OCI-LY7 (cell line): ENCODE measurements at regions of chr16 and their contacts with region 1.

Region 1: DNA sequence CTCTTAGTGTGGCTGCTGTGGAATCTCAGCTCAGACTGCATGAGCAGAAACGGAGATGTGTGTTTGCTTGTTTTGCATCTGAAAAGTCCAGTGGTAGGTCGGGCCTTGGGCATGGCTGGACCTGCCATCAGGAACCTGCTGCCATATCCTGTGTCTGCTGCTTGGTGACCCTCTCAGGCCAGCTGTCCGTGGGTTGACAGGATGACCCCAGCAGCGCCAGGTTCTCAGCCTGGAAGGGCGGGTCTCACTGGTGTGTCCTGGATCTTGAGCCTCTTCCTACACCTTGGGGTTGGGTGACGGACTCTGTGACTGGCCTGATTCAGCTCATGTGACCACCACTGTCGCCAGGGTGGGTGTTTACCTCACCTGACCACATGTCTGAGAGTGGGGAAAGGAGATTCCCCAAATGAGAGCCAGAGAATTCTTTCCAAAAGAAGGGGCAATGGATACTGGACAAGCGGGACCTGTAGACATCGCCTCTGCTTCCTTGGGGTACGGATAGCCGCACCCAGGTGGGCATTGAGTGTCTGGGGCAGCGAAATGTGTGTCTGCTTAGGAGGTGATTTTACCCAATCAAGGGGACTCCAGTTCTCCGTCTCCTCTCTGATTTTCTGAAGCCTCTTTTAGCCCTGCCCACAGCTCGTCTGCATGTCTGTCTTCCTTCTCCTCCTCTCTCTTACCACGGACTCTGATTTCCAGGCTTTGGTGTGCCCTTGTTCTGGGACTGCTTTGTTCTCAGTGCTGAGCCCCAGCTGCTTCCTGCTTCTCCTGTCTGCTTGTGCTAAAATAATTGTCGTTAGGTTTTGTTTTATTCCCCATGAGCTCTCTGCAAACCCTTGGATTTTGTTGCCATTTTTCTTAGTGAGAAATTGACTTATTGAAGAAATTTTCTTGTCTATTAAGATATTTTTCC is 399.7 kb downstream of the CPPED1 start:
- DNase-seq: no peak
- H3K4me3 ChIP-seq: no peak overlapping the region
- H3K27ac ChIP-seq: no peak overlapping the region
- H3K4me1 ChIP-seq: peaks cover 14% of the 10 kb centered on the region
- CTCF ChIP-seq: no peak

Region 2: GRCh38 chr16:12392585-12393091 is 11.4 kb before region 1 on chr16:
- CTCF ChIA-PET with region 1: interaction called, 12 read pairs
- POLR2A ChIA-PET with region 1: interaction called, 4 read pairs
- intact Hi-C with region 1: no loop called
- DNase-seq: no peak
- H3K4me3 ChIP-seq: no peak overlapping the region
- H3K27ac ChIP-seq: no peak overlapping the region
- H3K4me1 ChIP-seq: peaks cover 5% of the 10 kb centered on the region
- CTCF ChIP-seq: peak; percentile 67